ENCODE measurements at regions of chr5 and their contacts with region 1.

Region 1: DNA sequence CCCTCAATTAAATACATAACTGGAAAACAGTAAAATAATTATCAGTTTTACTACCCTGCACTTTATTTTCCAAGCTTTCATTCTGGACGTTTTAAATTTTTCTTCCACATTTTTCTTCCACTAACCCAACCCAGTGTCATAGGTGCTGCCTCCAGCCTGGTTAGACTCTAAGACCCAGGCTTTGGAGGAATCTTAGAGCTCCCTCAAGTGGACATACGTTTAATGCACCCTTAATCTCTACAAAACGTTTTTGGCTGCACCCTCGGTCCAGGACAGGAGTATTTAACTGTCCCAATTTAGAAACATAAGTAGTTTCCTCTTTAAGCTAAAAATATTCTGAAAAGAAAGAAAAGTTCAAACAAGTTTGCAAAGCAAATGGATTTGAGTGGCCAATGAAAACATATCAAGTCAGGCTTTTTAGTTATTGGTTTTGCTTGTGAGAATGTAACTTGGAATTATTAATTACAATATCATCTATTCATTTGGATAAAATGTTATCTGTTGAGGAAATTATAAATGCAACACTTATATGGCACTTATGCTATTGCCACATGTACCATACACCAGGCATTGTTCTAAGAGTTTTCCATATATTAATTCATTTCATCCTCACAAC is 38.9 kb downstream of the CDH6 start:
- DNase-seq: peak; percentile 56
- H3K4me3 Mint-ChIP-seq: no peak overlapping the region
- H3K27ac Mint-ChIP-seq: no peak overlapping the region
- H3K4me1 Mint-ChIP-seq: no peaks in the 10 kb centered on the region
- H3K27me3 Mint-ChIP-seq: no peaks in the 10 kb centered on the region
- CTCF ChIP-seq: peak; percentile 29

Region 2: GRCh38 chr5:30040488-30041118 is 1191.8 kb before region 1 on chr5:
- CTCF ChIA-PET with region 1: interaction called, 4 read pairs
- intact Hi-C with region 1: loop called (anchors 1 kb)
- DNase-seq: peak; percentile 37
- H3K4me3 Mint-ChIP-seq: no peak overlapping the region
- H3K27ac Mint-ChIP-seq: no peak overlapping the region
- H3K4me1 Mint-ChIP-seq: no peaks in the 10 kb centered on the region
- H3K27me3 Mint-ChIP-seq: no peaks in the 10 kb centered on the region
- CTCF ChIP-seq: peak; percentile 46

Region 3: GRCh38 chr5:30401479-30402058 is 830.8 kb before region 1 on chr5:
- CTCF ChIA-PET with region 1: no interaction called
- intact Hi-C with region 1: loop called (anchors 1 kb)
- DNase-seq: peak; percentile 54
- H3K4me3 Mint-ChIP-seq: no peak overlapping the region
- H3K27ac Mint-ChIP-seq: no peak overlapping the region
- H3K4me1 Mint-ChIP-seq: no peaks in the 10 kb centered on the region
- H3K27me3 Mint-ChIP-seq: no peaks in the 10 kb centered on the region
- CTCF ChIP-seq: no peak

Region 4: GRCh38 chr5:30804739-30805505 is 427.5 kb before region 1 on chr5:
- CTCF ChIA-PET with region 1: no interaction called
- intact Hi-C with region 1: loop called (anchors 10 kb)
- DNase-seq: no peak
- H3K4me3 Mint-ChIP-seq: no peak overlapping the region
- H3K27ac Mint-ChIP-seq: no peak overlapping the region
- H3K4me1 Mint-ChIP-seq: peaks cover 9% of the 10 kb centered on the region
- H3K27me3 Mint-ChIP-seq: no peaks in the 10 kb centered on the region
- CTCF ChIP-seq: no peak

Region 5: GRCh38 chr5:31270396-31270795 is 38.0 kb after region 1 on chr5:
- CTCF ChIA-PET with region 1: interaction called, 10 read pairs
- intact Hi-C with region 1: loop called (anchors 1 kb)
- DNase-seq: peak; percentile 19
- H3K4me3 Mint-ChIP-seq: no peak overlapping the region
- H3K27ac Mint-ChIP-seq: no peak overlapping the region
- H3K4me1 Mint-ChIP-seq: peaks cover 22% of the 10 kb centered on the region
- H3K27me3 Mint-ChIP-seq: no peaks in the 10 kb centered on the region
- CTCF ChIP-seq: no peak